Heart left ventricle (tissue), 16 donors: ENCODE measurements at regions of chr18 and their contacts with region 1.

Region 1: GRCh38 chr18:24118750-24119577 is 19.9 kb upstream of the CABYR start:
- DNase-seq: peak in 4 of 5 donors; percentile 42 to 69 (median 53)
- ATAC-seq: peak in 3 of 4 donors; percentile 59 to 75 (median 71)
- H3K4me3 ChIP-seq: no peak overlapping the region
- H3K27ac ChIP-seq: no peak overlapping the region
- H3K4me1 ChIP-seq: peaks cover 0 to 8% (median 0%) of the 10 kb centered on the region in 12 donors
- H3K27me3 ChIP-seq: no peaks in the 10 kb centered on the region
- CTCF ChIP-seq: peak; percentile 85 to 97 (median 94)
- POLR2A ChIP-seq: no peak

Region 2: GRCh38 chr18:23629444-23629946 is 489.5 kb before region 1 on chr18:
- intact Hi-C with region 1: loop called in 5 of 10 experiments (anchors 5 to 10 kb)
- DNase-seq: no peak
- ATAC-seq: no peak
- H3K4me3 ChIP-seq: no peak overlapping the region
- H3K27ac ChIP-seq: no peak overlapping the region
- H3K4me1 ChIP-seq: peaks cover 0 to 11% (median 0%) of the 10 kb centered on the region in 12 donors
- H3K27me3 ChIP-seq: no peaks in the 10 kb centered on the region
- CTCF ChIP-seq: no peak
- POLR2A ChIP-seq: no peak

Region 3: DNA sequence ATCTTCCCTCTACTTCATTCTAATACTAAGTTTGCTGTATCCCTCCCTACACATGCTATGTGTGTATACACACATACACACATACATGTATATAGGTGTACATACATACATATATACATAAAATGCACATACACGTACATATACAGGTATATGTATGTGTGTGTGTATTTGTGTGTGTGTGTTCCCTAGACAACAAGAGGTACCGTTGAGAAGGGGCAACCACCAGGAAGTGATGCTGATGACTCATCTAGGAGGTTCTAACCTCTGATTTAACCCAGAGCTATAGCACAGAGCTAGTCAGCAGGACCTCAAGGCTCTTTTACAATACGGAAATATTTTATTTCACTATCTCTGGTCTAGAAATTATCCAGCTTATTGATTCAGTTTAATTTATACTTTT is 290.5 kb before region 1 on chr18:
- intact Hi-C with region 1: loop called in 4 of 10 experiments (anchors 5 to 10 kb)
- DNase-seq: no peak
- ATAC-seq: no peak
- H3K4me3 ChIP-seq: no peak overlapping the region
- H3K27ac ChIP-seq: no peak overlapping the region
- H3K4me1 ChIP-seq: peaks cover 0 to 35% (median 16%) of the 10 kb centered on the region in 12 donors
- H3K27me3 ChIP-seq: no peaks in the 10 kb centered on the region
- CTCF ChIP-seq: no peak
- POLR2A ChIP-seq: no peak

Region 4: DNA sequence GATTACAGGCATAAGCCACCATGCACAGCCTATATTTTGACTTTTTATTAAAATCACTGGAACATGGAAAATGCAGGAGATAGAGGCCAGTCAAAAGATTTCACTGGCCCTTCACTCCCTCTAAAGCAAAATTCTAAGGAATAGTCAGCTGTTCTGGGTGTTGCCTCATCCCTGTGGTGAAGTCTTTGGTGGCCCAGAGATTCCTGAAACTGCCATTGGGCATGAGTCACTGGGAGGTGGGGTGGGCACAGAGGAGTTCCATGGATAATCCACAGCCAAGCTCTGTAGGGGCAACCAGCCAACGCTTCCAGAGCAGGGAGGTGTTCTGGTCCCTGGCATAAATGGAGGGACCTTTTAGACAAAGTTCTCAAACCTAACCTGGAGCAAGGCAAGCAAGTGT is 194.2 kb before region 1 on chr18:
- intact Hi-C with region 1: loop called in 2 of 10 experiments (anchors 10 kb)
- DNase-seq: no peak
- ATAC-seq: no peak
- H3K4me3 ChIP-seq: no peak overlapping the region
- H3K27ac ChIP-seq: no peak overlapping the region
- H3K4me1 ChIP-seq: no peaks in the 10 kb centered on the region
- H3K27me3 ChIP-seq: no peaks in the 10 kb centered on the region
- CTCF ChIP-seq: no peak
- POLR2A ChIP-seq: no peak

Region 5: DNA sequence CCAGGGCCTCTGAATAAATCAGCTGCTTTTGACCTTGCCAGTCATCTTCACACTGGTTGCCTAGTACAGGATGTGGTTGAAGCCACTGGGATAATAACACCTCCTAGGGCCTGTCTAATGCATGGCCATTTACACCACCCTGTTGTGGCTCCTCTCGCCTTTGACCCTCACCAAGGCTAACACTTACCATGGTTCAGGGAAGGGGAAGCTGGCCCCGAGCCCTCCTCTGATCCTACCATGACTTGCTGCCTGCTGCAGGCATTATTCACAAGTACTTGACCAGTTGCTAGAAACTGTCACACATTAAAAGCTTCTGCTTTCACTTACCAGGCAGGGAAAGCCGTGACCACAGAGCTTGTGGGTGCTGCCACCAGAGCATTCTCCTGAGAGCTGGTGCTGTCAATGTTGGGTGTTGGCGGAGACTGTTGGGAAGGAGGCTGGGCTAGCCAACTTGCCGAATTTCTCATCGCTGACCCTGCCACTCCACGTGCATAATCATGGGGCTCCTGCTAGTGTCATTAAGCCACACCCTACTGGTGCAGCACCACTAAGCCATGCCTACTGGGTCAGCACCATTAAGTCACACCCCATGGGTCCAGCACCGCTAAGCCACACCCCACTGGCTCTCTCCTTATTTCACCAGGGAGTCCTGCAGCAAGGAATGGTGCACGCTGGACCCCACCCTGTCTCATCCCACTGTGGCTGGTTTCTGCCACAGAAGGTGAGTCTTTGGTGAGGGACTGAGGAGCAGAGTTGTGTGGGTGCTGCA is 151.5 kb before region 1 on chr18:
- intact Hi-C with region 1: loop called in 4 of 10 experiments (anchors 10 kb)
- DNase-seq: no peak
- ATAC-seq: peak in 3 of 4 donors; percentile 25 to 34 (median 29)
- H3K4me3 ChIP-seq: no peak overlapping the region
- H3K27ac ChIP-seq: peak overlapping the region in 1 of 12 donors; percentile 25
- H3K4me1 ChIP-seq: peaks cover 0 to 21% (median 0%) of the 10 kb centered on the region in 12 donors
- H3K27me3 ChIP-seq: no peaks in the 10 kb centered on the region
- CTCF ChIP-seq: no peak
- POLR2A ChIP-seq: no peak

Region 6: DNA sequence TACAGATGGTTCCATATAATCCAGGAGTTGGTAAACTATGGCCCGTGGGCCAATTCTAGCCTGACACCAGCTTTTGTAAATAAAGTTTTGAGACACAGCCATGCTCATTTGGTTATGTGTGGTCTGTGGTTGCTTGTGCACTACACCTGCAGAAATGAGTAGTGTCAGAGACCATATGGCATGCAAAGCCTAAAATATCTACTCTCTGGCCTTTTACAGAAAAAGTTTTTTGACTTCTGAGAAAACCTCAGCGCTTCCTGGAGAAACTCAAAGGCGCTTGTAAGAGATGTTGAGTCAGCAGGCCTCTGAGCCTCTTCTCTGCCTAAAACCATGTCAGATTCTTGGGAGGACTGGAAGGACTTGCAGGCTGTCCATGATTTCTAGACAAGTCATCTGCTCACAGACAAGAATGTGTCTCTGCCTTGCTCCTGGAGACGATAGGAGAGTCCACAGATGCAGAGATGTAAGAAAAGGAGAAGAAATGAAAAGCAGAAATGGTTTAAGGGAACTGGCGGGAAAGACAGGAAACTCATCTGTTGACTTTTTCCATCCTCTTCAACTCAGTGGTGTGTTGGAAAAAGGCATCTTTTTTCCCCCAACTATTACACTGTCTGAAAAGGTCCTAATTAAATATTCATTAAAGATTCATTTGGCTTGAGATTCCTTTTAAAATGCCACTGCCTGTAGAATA is 99.2 kb before region 1 on chr18:
- intact Hi-C with region 1: loop called in 7 of 10 experiments (anchors 5 to 10 kb)
- DNase-seq: no peak
- ATAC-seq: no peak
- H3K4me3 ChIP-seq: no peak overlapping the region
- H3K27ac ChIP-seq: peak overlapping the region in 1 of 12 donors; percentile 54
- H3K4me1 ChIP-seq: peaks cover 0 to 85% (median 6%) of the 10 kb centered on the region in 12 donors
- H3K27me3 ChIP-seq: no peaks in the 10 kb centered on the region
- CTCF ChIP-seq: no peak
- POLR2A ChIP-seq: no peak

Region 7: GRCh38 chr18:24039671-24040070 is 79.3 kb before region 1 on chr18:
- intact Hi-C with region 1: no loop called
- DNase-seq: no peak
- ATAC-seq: no peak
- H3K4me3 ChIP-seq: no peak overlapping the region
- H3K27ac ChIP-seq: peak overlapping the region in 1 of 12 donors; percentile 53
- H3K4me1 ChIP-seq: peaks cover 0 to 25% (median 0%) of the 10 kb centered on the region in 12 donors
- H3K27me3 ChIP-seq: no peaks in the 10 kb centered on the region
- CTCF ChIP-seq: no peak
- POLR2A ChIP-seq: no peak